Dendritic cell treated with granulocyte-macrophage colony-stimulating factor and Interleukin-4, amounts not matched to agents 40 ng/mL and 50 ng/mL, for 4 days (primary cell): ENCODE measurements at regions of chr3 and their contacts with region 1.

Region 1: GRCh38 chr3:188900421-188900951 is 271.3 kb upstream of the TPRG1 start:
- H3K4me3 Mint-ChIP-seq: no peak overlapping the region
- H3K27ac Mint-ChIP-seq: peak overlapping the region; percentile 35
- H3K4me1 Mint-ChIP-seq: peaks cover 49% of the 10 kb centered on the region
- H3K27me3 Mint-ChIP-seq: no peaks in the 10 kb centered on the region

Region 2: DNA sequence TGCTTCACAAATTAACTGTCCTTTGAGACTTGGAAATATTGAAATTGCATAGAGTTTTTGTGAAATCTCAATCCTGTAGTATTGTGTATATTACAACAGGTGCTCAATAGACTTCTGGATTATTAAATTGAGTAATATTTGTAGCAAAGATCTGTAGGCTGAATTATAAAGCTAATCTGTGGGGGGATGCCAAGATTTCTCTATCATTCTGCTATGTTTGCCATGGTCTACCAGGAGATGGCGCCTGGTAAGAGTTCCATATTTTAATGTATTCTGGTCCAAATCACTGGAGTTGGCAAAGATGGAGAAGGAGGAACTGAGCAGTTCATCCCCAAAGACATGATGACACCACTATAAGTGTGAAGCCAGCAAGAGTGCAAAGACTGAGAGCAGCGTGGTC is 69.6 kb before region 1 on chr3:
- intact Hi-C with region 1: loop called (anchors 10 kb)
- H3K4me3 Mint-ChIP-seq: no peak overlapping the region
- H3K27ac Mint-ChIP-seq: peak overlapping the region; percentile 37
- H3K4me1 Mint-ChIP-seq: peaks cover 47% of the 10 kb centered on the region
- H3K27me3 Mint-ChIP-seq: no peaks in the 10 kb centered on the region

Region 3: DNA sequence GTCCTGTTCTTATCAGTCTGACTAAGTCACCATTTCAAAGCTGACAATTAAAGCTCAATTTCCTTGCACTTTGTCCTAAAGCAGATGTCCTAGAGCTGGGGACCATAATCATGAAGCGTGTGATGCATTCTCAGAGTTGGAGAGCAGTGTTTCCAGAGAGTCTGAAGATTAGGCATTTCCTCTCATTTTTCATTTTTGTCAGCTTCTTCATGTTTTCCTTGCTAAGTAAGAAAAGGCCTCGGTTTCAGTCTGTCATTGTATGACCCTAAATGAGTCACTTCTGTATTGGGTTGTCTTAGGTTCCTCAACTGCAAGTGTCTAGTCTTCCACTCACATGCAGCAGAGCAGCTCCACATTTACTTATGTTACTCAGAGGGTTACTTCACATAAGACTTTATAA is 14.1 kb after region 1 on chr3:
- intact Hi-C with region 1: loop called (anchors 2 kb)
- H3K4me3 Mint-ChIP-seq: no peak overlapping the region
- H3K27ac Mint-ChIP-seq: peak overlapping the region; percentile 91
- H3K4me1 Mint-ChIP-seq: peaks cover 68% of the 10 kb centered on the region
- H3K27me3 Mint-ChIP-seq: no peaks in the 10 kb centered on the region